ENCODE measurements at regions of chr9 and their contacts with region 1.

Region 1: GRCh38 chr9:87812375-87813118 is 70.1 kb upstream of the SPATA31E1 start:
- DNase-seq: no peak
- H3K4me3 Mint-ChIP-seq: no peak overlapping the region
- H3K27ac Mint-ChIP-seq: no peak overlapping the region
- H3K4me1 Mint-ChIP-seq: peaks cover 11% of the 10 kb centered on the region
- H3K27me3 Mint-ChIP-seq: peaks cover 7% of the 10 kb centered on the region

Region 2: DNA sequence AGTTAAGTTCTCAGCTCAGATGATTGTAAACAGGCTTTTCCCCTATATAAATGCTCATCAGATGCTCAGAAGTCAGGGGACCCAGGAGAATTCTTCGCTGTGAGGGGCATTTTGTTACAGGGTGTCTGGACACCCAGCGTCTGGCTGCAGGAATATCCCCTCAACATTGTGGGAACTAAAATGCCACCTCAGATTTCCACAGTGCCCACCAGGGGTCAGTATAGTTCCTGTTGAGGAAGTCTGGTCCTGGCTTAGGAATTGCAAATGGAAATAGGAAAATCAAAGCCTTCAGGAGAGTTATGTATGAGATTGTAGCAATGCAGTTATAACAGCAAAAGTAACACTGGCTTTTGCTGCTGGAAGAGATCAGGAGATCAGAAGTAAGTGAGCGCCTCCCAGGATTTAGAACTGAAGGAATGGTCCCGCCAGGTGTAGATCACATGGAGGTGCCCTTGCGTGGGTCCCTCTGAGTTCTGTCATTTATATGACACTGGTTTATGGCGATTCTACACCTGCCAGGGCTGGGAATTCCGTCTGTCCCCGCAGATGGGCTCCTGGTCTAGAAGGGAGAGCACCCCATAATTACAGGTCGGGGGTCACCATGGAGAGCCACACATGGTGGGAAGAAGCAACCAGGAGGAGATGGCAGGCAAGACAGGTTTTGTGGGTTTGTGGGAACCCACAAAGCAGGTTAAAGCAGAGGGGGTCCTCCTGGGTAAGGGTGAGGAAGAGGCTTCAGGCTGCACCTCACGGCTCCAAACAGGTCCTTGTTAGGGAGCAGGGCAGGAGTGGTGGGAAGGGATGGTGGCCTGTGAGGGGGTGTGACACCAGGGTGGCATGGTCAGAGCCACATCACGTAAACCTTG is 133.7 kb before region 1 on chr9:
- CTCF ChIA-PET with region 1: interaction called, 17 read pairs
- DNase-seq: peak; percentile 60
- H3K4me3 Mint-ChIP-seq: no peak overlapping the region
- H3K27ac Mint-ChIP-seq: no peak overlapping the region
- H3K4me1 Mint-ChIP-seq: peaks cover 18% of the 10 kb centered on the region
- H3K27me3 Mint-ChIP-seq: peaks cover 7% of the 10 kb centered on the region